ENCODE measurements at regions of chr1 and their contacts with region 1.

Region 1: DNA sequence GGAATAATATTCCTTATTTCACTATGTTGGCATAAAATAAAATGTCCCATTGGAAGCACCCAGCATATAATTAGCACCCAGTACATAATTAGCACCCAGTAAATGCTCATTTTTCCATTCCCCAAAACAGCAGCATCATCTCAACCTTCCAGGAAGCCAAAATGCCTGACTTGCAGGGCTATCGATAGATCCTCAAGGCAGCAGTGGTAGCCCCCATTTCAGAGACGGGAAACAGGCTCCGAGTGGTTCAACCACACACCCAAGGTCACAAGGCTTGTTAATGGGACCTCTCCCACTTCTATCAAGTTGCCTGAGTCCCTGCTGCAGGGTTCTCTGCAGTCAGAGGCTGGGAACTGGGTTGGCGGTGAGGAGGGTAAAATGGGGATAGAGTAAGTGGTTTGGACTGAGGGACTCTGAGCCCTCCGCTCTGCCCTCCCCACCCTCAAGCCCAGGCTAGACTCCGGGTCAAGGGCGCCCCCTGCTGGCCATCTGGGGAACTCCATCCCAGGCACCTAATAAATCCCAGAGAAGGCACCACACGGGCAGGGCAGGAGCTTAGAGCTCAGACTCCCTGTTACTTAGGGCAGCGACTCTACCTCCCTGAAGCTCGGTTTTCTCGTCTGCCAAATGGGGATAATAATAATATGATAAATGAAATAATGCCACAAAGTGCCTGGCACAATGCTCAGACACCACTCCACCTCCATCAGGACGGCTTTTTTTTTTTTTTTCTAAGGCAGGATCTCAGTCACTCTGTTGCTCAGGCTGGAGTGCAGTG is 21.9 kb upstream of the LAPTM5 start:
- DNase-seq: peak; percentile 59 to 88 (median 79)
- H3K4me3 ChIP-seq: no peak overlapping the region
- H3K27ac ChIP-seq: no peak overlapping the region
- H3K4me1 ChIP-seq: no peaks in the 10 kb centered on the region
- H3K27me3 ChIP-seq: no peaks in the 10 kb centered on the region
- CTCF ChIP-seq: peak; percentile 74 to 93 (median 75)
- EP300 ChIP-seq: no peak
- POLR2A ChIP-seq: no peak

Region 2: GRCh38 chr1:30478799-30479563 is 300.5 kb before region 1 on chr1:
- intact Hi-C with region 1: no loop called
- DNase-seq: no peak
- H3K4me3 ChIP-seq: no peak overlapping the region
- H3K27ac ChIP-seq: no peak overlapping the region
- H3K4me1 ChIP-seq: no peaks in the 10 kb centered on the region
- H3K27me3 ChIP-seq: no peaks in the 10 kb centered on the region
- CTCF ChIP-seq: no peak
- EP300 ChIP-seq: no peak
- POLR2A ChIP-seq: no peak

Region 3: DNA sequence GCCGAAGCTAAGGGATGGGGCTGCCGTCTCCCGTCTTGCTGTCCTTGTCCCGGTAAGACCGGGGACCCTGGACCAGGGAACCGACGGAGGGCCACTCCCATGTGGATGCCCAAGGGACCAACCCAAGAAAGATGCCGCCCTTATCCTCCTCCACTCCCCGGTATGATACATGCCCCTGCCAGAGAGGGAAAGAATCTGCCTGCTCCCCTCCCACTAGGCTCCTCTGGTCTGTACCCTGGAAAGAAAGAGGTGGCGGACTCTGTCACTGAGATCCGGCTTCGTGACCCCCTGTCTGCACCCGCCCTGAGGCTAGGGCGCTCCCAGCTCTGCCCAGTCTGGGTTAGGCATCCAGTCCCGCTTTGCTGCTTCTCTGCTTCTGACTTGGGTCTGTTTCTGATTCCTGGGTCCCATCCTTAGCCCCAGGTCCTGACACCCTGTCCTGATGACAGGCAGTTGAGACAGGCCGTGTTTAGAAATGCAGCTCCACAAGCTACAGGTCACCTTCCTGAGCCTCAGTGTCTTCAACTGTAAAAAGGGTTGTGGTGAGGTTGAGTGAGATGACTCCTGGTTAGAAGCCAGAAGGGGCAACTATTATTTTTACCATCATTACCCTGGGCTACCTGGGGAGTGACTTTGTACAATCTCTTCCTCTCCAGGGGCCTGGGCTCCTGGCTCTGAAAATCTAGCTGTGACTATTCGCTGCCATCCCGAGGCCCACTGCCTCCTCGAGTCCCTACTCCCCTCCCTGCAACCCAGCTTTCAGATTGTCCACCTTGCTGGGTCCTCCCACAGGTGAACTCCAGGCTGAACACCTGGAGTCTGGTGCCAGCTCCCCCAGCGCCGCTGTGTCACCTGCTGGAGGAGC is 59.8 kb before region 1 on chr1:
- intact Hi-C with region 1: loop called (anchors 2 to 10 kb)
- DNase-seq: peak in 4 of 5 donors; percentile 30 to 61 (median 53)
- H3K4me3 ChIP-seq: peak overlapping the region; percentile 58
- H3K27ac ChIP-seq: peak overlapping the region; percentile 98 to 100
- H3K4me1 ChIP-seq: peaks cover 1% of the 10 kb centered on the region
- H3K27me3 ChIP-seq: no peaks in the 10 kb centered on the region
- CTCF ChIP-seq: no peak
- EP300 ChIP-seq: no peak
- POLR2A ChIP-seq: no peak

Region 4: GRCh38 chr1:30809514-30810263 is 30.2 kb after region 1 on chr1:
- intact Hi-C with region 1: no loop called
- DNase-seq: peak in 1 of 5 donors; percentile 6
- H3K4me3 ChIP-seq: no peak overlapping the region
- H3K27ac ChIP-seq: no peak overlapping the region
- H3K4me1 ChIP-seq: no peaks in the 10 kb centered on the region
- H3K27me3 ChIP-seq: no peaks in the 10 kb centered on the region
- CTCF ChIP-seq: no peak
- EP300 ChIP-seq: no peak
- POLR2A ChIP-seq: no peak